ENCODE measurements at regions of chr2 and their contacts with region 1.

Region 1: DNA sequence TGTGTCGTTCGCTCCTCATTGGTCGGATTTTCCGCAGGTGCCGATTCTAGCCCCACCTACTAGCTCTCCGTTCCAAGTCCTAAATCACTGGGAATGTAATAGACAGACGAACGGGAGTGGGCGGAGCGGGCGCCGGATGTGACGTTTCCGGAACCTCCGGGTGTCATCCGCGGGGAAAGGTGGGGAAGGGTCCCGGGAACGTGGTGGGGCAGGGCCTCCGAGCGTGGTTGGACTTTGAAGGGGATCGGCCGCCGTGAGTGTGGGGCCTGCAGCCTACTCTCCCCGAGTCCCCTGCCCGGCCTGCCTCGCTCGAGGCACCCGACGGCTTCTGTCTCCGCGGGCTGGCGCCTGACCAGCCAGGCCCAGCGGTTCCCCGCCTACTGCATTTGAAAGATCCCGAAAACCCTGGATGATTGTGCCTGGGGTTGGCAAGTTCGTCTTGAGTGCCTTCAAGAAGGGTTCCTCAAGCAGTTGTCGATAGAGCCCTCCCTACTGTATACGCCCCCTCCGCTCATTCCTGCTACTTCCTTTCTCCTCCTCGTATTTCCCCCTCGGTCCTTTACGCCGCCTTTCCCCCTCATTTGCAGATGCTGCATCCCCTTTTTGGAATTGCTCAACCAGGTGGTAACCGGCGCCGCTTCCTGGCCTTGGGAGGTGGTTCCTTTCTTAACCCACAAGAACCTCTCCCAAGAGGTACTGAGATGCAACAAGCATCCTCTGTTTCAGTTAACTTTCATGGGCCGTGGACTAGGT is at the start of gene STAMBP:
- DNase-seq: peak; percentile 98 to 99
- ATAC-seq: peak; percentile 98
- H3K4me3 ChIP-seq: peak within 1 kb of the TSS; percentile 62
- H3K27ac ChIP-seq: peak within 1 kb of the TSS; percentile 64 to 96
- H3K4me1 ChIP-seq: peaks cover 2 to 3% of the 10 kb centered on the region in 2 donors
- H3K27me3 ChIP-seq: no peaks in the 10 kb centered on the region
- total RNA-seq, gene STAMBP: 32.4 to 33.2 TPM

Region 2: DNA sequence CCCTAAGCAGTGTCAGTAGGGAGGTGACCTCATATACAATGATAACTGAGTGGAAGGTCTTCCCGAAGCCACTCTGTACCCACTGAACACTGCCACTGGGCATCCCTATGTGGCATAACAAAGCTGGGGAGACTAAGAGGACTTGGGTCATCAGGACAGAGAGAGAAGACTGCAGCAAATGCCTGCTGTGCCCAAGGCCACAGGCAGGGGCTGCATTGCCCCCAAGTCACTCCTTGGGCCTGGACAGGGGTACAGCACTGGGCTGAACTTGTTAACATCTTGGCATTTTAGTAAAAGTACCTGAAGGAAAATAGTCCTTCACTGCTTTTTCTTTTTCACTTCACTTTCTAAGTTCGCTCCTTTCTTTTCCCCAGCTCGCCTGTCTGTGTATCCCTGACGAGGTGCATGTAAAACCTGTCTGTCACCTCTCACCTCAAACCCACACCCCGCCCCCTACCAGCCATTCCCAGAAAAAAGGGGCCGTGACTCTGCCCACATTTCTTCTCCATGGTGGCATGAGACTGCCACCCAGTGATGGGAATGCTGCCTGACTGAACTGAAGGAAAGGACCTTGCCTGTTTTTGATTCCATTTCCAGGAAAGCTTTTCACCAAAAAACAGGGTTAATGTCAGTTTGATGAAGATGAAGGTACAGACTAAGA is 432.3 kb after region 1 on chr2:
- intact Hi-C with region 1: loop called in 1 of 2 experiments (anchors 10 kb)
- DNase-seq: peak in 1 of 2 donors; percentile 59
- ATAC-seq: no peak
- H3K4me3 ChIP-seq: no peak overlapping the region
- H3K27ac ChIP-seq: no peak overlapping the region
- H3K4me1 ChIP-seq: no peaks in the 10 kb centered on the region
- H3K27me3 ChIP-seq: no peaks in the 10 kb centered on the region

Region 3: DNA sequence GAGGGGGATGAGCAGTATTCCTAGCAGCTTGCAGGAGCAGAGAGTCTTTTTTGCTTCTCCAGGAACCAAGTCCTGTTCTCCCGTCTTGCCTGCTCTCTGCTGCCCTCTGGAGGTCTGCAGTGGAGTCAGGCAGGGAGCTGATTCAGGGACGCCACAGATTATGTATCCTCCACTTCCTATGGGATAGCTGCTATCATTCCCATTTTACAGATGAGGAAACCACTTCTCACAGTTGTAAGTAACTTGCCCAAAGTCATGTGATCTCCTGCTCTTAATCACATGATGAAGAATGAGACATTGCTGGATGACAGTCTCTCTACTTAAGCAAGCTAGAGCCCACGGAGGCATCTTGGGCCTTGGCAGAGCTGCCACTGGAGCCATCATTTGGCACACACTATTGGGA is 505.9 kb after region 1 on chr2:
- intact Hi-C with region 1: loop called in 1 of 2 experiments (anchors 10 kb)
- DNase-seq: peak; percentile 81 to 89
- ATAC-seq: peak; percentile 88
- H3K4me3 ChIP-seq: no peak overlapping the region
- H3K27ac ChIP-seq: no peak overlapping the region
- H3K4me1 ChIP-seq: no peaks in the 10 kb centered on the region
- H3K27me3 ChIP-seq: no peaks in the 10 kb centered on the region

Measured in aorta (tissue), 5 donors.